Activated CD8-positive, alpha-beta T cell treated with anti-CD3 and anti-CD28 coated beads for 36 hours (primary cell): ENCODE measurements at regions of chr12 and their contacts with region 1.

Region 1: GRCh38 chr12:117119592-117120198 is 20.5 kb upstream of the TESC start:
- DNase-seq: peak; percentile 47
- ATAC-seq: peak; percentile 74
- H3K4me3 Mint-ChIP-seq: no peak overlapping the region
- H3K27ac Mint-ChIP-seq: no peak overlapping the region
- H3K4me1 Mint-ChIP-seq: no peaks in the 10 kb centered on the region
- H3K27me3 Mint-ChIP-seq: no peaks in the 10 kb centered on the region
- CTCF ChIP-seq: peak; percentile 94

Region 2: GRCh38 chr12:116703214-116703795 is 416.4 kb before region 1 on chr12:
- CTCF ChIA-PET with region 1: interaction called, 21 read pairs
- POLR2A ChIA-PET with region 1: no interaction called
- intact Hi-C with region 1: no loop called
- DNase-seq: peak; percentile 72
- ATAC-seq: peak; percentile 78
- H3K4me3 Mint-ChIP-seq: no peak overlapping the region
- H3K27ac Mint-ChIP-seq: no peak overlapping the region
- H3K4me1 Mint-ChIP-seq: peaks cover 2% of the 10 kb centered on the region
- H3K27me3 Mint-ChIP-seq: peaks cover 1% of the 10 kb centered on the region
- CTCF ChIP-seq: peak; percentile 98

Region 3: GRCh38 chr12:116708826-116709756 is 410.6 kb before region 1 on chr12:
- CTCF ChIA-PET with region 1: interaction called, 21 read pairs
- POLR2A ChIA-PET with region 1: no interaction called
- intact Hi-C with region 1: no loop called
- DNase-seq: peak; percentile 65
- ATAC-seq: peak; percentile 88
- H3K4me3 Mint-ChIP-seq: peak overlapping the region; percentile 40
- H3K27ac Mint-ChIP-seq: no peak overlapping the region
- H3K4me1 Mint-ChIP-seq: peaks cover 9% of the 10 kb centered on the region
- H3K27me3 Mint-ChIP-seq: peaks cover 3% of the 10 kb centered on the region
- CTCF ChIP-seq: peak; percentile 63

Region 4: DNA sequence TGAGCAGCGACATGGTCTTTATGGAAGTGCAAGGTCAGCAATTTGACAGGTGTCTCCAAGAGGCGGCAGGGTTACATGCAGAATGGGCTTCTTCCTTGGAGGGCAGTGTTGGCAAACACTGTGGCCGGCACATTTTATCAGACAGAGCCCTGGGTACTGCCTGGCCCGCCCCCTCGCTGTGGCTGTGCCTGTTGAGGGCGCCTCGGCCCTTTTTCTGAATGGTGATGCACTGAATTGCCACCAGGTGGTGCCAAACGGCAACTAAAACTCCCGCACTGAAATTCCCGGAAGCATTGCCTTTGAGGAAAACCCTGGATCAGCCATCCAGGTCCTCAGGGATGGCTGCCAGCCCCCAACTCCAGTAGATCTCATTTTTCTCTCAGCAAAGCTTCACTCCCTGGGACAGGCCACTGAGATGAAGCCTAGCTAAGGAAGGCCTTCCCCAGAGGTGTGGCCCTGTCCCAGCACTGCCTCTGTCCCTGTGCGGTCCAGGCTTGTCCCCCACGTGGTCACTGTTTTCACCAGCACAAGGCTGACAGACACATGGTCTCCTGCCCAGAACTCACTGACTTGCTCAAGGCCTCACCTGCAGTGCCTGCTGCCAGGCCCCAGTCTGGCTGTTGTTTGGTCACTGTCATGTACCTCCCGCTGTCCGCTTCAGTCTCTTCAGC is 94.1 kb before region 1 on chr12:
- CTCF ChIA-PET with region 1: interaction called, 80 read pairs
- POLR2A ChIA-PET with region 1: interaction called, 3 read pairs
- intact Hi-C with region 1: loop called (anchors 5 kb)
- DNase-seq: peak; percentile 63
- ATAC-seq: peak; percentile 92
- H3K4me3 Mint-ChIP-seq: no peak overlapping the region
- H3K27ac Mint-ChIP-seq: peak overlapping the region; percentile 60
- H3K4me1 Mint-ChIP-seq: no peaks in the 10 kb centered on the region
- H3K27me3 Mint-ChIP-seq: no peaks in the 10 kb centered on the region
- CTCF ChIP-seq: peak; percentile 99

Region 5: DNA sequence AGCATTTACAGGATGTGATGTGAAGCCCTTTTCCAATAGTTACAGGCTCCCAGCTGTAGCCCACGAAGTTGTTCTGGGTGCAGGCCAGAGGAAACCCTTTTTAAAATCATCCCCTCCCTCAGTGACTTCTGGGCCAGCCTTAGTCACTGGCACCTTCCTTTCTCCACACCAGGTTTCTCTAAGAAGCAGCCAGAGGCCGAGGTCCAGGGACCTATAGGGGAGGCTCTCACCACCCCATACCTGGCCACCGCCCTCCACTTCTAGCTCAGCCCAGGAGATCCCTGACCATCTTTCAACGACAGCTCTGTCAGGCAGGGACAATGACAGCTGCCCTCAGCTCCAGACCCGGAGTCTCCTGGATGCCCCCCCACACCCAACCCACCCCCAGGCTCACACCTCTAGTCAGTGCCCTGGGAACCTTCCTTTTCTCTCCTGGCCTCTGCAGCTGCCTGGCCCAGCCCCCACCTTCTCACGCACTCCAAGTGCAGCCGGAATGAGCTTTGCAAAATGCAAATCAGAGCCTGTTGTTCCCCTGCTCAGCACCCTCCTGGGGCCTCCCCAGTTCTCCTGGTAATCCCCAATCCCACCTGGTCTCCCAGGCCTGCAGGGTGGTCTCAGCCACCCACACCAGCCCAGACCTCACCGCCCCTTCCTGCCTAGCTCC is 67.2 kb before region 1 on chr12:
- CTCF ChIA-PET with region 1: no interaction called
- POLR2A ChIA-PET with region 1: no interaction called
- intact Hi-C with region 1: no loop called
- DNase-seq: no peak
- ATAC-seq: no peak
- H3K4me3 Mint-ChIP-seq: no peak overlapping the region
- H3K27ac Mint-ChIP-seq: no peak overlapping the region
- H3K4me1 Mint-ChIP-seq: peaks cover 3% of the 10 kb centered on the region
- H3K27me3 Mint-ChIP-seq: no peaks in the 10 kb centered on the region
- CTCF ChIP-seq: no peak

Region 6: DNA sequence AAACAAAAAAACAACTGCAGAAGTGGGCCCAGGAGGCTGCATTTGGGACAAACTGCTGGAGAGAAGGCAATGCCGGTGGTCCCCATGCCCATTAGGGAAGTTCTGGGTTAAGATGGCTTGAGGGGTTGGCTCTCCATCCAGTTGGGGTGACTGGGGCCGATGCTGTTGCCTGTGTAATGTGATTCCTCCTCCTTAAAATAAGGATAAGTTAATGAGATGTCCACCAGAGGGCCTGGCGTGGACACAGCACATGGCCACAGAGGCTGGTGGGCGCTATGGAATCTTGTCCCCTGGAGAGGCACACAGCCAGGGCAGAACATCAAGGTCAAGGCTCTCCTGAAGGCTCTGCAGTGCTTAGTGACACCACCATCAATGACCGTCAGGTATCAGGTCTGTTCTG is 19.4 kb before region 1 on chr12:
- CTCF ChIA-PET with region 1: interaction called, 12 read pairs
- POLR2A ChIA-PET with region 1: no interaction called
- intact Hi-C with region 1: no loop called
- DNase-seq: peak; percentile 26
- ATAC-seq: no peak
- H3K4me3 Mint-ChIP-seq: peak overlapping the region; percentile 75
- H3K27ac Mint-ChIP-seq: no peak overlapping the region
- H3K4me1 Mint-ChIP-seq: peaks cover 11% of the 10 kb centered on the region
- H3K27me3 Mint-ChIP-seq: peaks cover 14% of the 10 kb centered on the region
- CTCF ChIP-seq: no peak

Region 7: DNA sequence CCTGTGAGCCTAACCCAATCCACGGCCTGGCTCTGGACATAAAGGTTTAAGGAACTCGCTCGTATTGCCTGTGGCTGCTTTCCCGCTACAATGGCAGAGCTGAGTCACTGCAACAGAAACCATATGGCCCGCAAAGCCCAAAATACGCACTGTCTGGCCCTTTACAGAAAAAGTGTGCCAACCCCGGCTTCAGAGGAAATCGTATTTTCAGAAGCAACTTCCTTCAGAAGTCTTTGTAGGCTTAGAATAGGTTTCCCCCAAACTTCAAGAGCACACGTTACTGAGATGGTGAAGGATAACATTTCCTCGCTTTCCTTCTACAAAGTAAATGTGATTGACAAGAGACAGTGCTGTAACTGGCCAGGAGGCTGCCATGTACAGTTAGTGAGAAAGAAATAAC is 14.4 kb after region 1 on chr12:
- CTCF ChIA-PET with region 1: interaction called, 40 read pairs
- POLR2A ChIA-PET with region 1: interaction called, 4 read pairs
- intact Hi-C with region 1: no loop called
- DNase-seq: peak; percentile 87
- ATAC-seq: peak; percentile 88
- H3K4me3 Mint-ChIP-seq: peak overlapping the region; percentile 23
- H3K27ac Mint-ChIP-seq: peak overlapping the region; percentile 88
- H3K4me1 Mint-ChIP-seq: peaks cover 18% of the 10 kb centered on the region
- H3K27me3 Mint-ChIP-seq: no peaks in the 10 kb centered on the region
- CTCF ChIP-seq: no peak